PC-9 (cell line): ENCODE measurements at regions of chr9 and their contacts with region 1.

Region 1: DNA sequence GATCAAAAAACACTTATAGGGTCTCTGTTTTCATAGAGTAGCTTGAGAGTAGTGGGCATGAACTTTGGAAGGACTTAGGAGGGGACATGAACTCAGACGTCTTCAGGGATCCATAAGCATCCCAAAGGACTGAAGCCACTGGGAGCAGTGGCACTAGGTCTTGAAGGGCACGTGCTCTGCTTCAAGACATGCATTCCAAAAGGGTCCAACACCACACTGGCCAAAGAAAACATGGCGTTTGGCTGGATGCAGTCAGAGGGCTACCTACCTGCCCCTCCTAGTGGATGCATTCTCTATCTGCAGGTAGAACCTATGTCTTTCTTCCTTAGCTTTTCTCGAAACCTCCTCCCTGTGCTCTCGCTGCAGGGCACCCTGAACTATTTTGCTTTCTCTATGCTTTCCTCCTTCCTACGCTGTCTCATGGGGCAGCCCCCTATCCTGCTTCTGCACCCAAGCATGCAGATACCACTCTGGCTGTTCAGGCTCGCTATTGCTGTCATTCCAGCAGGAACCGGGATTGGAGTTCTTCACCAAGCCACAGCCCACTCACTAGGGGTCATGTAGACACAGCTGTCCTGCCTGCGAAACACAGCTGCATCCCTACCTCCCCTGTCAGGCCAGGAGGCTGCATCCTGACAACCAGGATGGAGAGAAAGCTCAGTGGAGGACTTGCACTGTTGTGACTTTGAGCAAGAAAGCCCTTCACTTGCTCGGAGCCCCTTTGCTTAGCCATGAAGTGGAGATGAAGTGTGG is 11.9 kb downstream of the FAM240B start:
- DNase-seq: no peak
- H3K4me3 ChIP-seq: no peak overlapping the region
- H3K27ac ChIP-seq: no peak overlapping the region
- H3K4me1 ChIP-seq: no peaks in the 10 kb centered on the region; the same call in 1 of the 2 replicates
- H3K27me3 ChIP-seq: no peaks in the 10 kb centered on the region
- CTCF ChIP-seq: peak; percentile 35; the same call in 1 of the 2 replicates

Region 2: DNA sequence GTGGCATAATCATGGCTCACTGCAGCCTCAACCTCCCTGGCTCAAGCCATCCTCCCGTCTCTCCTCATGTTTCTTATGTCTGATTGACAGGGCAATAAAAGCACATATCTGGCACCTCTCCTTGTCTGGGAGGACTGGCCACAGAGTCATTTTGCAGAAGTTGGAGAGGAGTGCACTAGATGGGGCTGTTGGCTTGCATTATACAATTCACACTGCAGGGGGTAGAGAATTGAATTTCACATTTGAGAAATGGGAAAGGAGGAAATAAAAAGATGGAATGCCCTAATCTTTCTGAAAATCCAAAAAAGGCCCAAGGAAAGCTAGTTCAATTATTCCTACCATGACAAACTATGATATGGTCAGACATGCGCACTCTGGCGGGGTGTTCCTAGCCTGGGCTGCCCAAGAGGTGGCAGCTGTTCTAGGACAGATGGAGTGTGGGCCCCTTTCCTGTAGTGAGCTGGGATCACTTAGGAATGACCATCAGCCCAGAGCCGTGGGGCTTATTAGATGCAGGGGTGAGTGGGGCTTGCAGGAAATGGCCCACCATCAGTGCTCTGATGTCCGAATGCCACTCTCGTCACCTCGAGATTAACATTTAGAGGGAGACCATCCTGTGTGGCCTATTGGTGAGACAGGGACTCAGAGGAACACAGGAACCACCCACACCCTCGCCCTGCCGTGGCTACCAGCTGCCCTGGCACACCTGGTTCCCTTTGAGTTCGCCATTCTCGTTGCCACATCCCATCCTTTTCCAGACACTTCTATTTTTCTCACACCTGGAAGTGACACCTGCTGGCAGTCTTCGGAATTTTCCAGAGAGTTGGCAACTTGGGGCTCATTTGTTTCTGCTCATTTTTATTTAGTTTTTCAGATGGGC is 65.8 kb before region 1 on chr9:
- CTCF ChIA-PET with region 1: interaction called, 33 read pairs
- POLR2A ChIA-PET with region 1: no interaction called
- intact Hi-C with region 1: loop called (anchors 10 kb)
- DNase-seq: peak in 1 of 2 experiments; percentile 22
- H3K4me3 ChIP-seq: no peak overlapping the region
- H3K27ac ChIP-seq: no peak overlapping the region
- H3K4me1 ChIP-seq: peaks cover 10% of the 10 kb centered on the region; the same call in 1 of the 2 replicates
- H3K27me3 ChIP-seq: no peaks in the 10 kb centered on the region
- CTCF ChIP-seq: peak; percentile 57